ENCODE measurements at regions of chr6 and their contacts with region 1.

Region 1: GRCh38 chr6:26520853-26521599 is 17.1 kb upstream of the HMGN4 start:
- DNase-seq: peak; percentile 78
- ATAC-seq: peak; percentile 72
- H3K4me3 Mint-ChIP-seq: peak overlapping the region; percentile 87
- H3K27ac Mint-ChIP-seq: peak overlapping the region; percentile 92
- H3K4me1 Mint-ChIP-seq: peaks cover 43% of the 10 kb centered on the region
- H3K27me3 Mint-ChIP-seq: peaks cover 1% of the 10 kb centered on the region
- CTCF ChIP-seq: no peak

Region 2: DNA sequence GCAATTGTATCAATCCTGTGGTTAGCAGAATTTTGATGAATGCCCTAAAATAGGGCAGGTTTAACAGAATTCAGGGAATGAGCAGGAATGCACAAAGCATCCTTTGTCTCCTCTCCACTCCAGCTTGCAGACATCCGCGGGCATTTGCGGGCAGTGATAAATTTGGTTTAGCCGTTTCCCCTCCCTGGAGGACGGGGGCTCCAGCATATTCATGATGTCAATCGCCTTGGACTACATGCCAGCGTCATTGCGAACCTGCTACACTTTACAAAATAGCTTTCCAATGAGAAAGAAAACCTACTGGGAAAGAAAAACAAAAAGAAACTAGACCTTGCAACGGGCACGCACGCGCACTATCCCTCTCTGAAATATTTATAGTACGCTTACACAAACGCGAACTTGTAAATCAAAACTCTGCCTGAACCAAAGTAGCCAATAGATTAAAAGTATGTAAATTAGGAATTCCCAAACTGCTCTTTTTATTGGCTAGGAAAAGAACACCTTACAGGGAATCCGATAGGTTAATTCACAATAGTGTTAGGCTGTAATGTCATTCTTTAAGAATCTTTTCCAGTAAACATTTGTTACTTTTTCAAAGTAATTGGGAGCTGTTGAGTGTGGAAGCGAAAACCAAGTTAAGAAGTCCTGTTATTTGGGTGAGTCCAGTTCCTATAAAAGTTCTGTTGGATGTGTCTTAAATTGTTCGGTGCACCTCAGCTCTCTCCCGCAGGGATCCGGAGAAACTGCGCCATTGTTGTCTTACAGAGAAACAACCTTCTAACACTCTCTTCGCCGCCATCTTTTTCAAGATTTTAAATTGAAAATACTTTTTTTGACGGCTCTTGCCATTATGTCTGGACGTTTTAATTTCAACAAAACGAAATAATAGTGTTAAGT is 297.1 kb before region 1 on chr6:
- CTCF ChIA-PET with region 1: no interaction called
- POLR2A ChIA-PET with region 1: no interaction called
- intact Hi-C with region 1: loop called (anchors 5 kb)
- DNase-seq: no peak
- ATAC-seq: peak; percentile 87
- H3K4me3 Mint-ChIP-seq: no peak overlapping the region
- H3K27ac Mint-ChIP-seq: no peak overlapping the region
- H3K4me1 Mint-ChIP-seq: peaks cover 4% of the 10 kb centered on the region
- H3K27me3 Mint-ChIP-seq: no peaks in the 10 kb centered on the region
- CTCF ChIP-seq: no peak

Region 3: DNA sequence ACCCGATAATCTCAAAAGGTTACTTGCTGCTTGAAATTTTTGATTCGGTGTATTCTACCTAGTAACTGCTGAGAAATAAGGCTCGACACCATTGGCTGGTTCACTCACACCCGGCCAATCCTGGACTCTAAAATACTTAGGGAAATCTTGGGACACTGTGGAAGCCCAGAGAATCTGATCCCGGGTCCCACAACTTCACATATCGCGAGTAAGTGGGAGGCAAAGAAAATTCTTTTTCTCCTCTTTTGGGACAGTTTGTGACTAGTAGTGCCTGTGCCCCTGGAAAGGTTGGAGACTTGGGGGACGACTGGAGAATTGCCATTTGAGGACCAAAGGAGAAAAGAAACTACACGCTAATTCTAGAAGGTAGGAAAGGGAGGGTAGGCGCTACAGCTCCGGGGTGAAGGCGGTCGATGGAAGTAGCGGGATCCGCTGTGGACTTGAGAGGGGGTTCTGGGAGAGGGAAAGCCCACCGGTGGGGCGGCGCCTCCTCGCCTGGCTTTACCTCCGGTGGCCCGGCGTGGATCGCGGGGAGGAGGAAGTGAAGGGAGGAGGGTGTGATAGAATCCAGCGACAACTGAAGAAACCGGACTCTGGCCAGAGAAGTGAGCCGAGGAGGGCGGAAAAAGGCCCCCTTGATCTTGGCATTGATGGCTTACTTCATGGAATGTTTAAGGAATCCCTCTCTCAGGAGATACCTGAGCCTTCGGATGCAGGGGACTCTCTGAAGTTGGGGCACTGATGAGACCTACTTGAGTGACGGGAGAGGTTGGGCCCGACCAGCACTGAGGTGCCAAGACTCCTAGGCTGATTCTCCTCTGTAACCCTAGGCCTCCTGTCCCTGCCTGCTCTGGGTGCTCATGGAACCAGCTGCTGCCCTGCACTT is 99.5 kb before region 1 on chr6:
- CTCF ChIA-PET with region 1: no interaction called
- POLR2A ChIA-PET with region 1: no interaction called
- intact Hi-C with region 1: loop called (anchors 5 kb)
- DNase-seq: peak; percentile 38
- ATAC-seq: peak; percentile 95
- H3K4me3 Mint-ChIP-seq: no peak overlapping the region
- H3K27ac Mint-ChIP-seq: peak overlapping the region; percentile 56
- H3K4me1 Mint-ChIP-seq: peaks cover 5% of the 10 kb centered on the region
- H3K27me3 Mint-ChIP-seq: no peaks in the 10 kb centered on the region
- CTCF ChIP-seq: no peak

Region 4: GRCh38 chr6:26431258-26432172 is 89.5 kb before region 1 on chr6:
- CTCF ChIA-PET with region 1: no interaction called
- POLR2A ChIA-PET with region 1: no interaction called
- intact Hi-C with region 1: no loop called
- DNase-seq: no peak
- ATAC-seq: no peak
- H3K4me3 Mint-ChIP-seq: no peak overlapping the region
- H3K27ac Mint-ChIP-seq: no peak overlapping the region
- H3K4me1 Mint-ChIP-seq: no peaks in the 10 kb centered on the region
- H3K27me3 Mint-ChIP-seq: no peaks in the 10 kb centered on the region
- CTCF ChIP-seq: no peak

Region 5: DNA sequence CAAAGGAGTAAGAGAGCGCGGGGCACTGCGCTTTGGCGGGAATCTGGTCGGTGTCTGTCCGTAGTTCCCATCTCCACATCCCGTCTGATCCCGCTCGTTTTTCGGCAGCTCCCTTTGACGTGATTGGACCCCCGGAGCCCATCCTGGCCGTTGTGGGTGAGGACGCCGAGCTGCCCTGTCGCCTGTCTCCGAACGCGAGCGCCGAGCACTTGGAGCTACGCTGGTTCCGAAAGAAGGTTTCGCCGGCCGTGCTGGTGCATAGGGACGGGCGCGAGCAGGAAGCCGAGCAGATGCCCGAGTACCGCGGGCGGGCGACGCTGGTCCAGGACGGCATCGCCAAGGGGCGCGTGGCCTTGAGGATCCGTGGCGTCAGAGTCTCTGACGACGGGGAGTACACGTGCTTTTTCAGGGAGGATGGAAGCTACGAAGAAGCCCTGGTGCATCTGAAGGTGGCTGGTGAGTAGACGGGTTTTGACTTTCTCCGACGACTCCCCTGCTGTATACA is 19.5 kb before region 1 on chr6:
- CTCF ChIA-PET with region 1: interaction called, 4 read pairs
- POLR2A ChIA-PET with region 1: interaction called, 18 read pairs
- intact Hi-C with region 1: no loop called
- DNase-seq: peak; percentile 37
- ATAC-seq: peak; percentile 58
- H3K4me3 Mint-ChIP-seq: peak overlapping the region; percentile 85
- H3K27ac Mint-ChIP-seq: no peak overlapping the region
- H3K4me1 Mint-ChIP-seq: peaks cover 25% of the 10 kb centered on the region
- H3K27me3 Mint-ChIP-seq: peaks cover 2% of the 10 kb centered on the region
- CTCF ChIP-seq: no peak

Region 6: GRCh38 chr6:26537846-26538571 is 17.0 kb after region 1 on chr6 and contains the start of gene HMGN4:
- CTCF ChIA-PET with region 1: interaction called, 9 read pairs
- POLR2A ChIA-PET with region 1: interaction called, 74 read pairs
- intact Hi-C with region 1: loop called (anchors 1 kb)
- DNase-seq: peak; percentile 73
- ATAC-seq: peak; percentile 67
- H3K4me3 Mint-ChIP-seq: peak within 1 kb of the TSS; percentile 98
- H3K27ac Mint-ChIP-seq: peak within 1 kb of the TSS; percentile 97
- H3K4me1 Mint-ChIP-seq: peaks cover 65% of the 10 kb centered on the region
- H3K27me3 Mint-ChIP-seq: peaks cover 7% of the 10 kb centered on the region
- CTCF ChIP-seq: no peak
- total RNA-seq, gene HMGN4: 74.5 and 82.2 TPM in 2 replicates

Measured in activated B cell treated with CpG ODN at 0.5 μM for 24 hours (primary cell).